Endothelial cell of umbilical vein (primary cell): ENCODE measurements at regions of chr7 and their contacts with region 1.

Region 1: DNA sequence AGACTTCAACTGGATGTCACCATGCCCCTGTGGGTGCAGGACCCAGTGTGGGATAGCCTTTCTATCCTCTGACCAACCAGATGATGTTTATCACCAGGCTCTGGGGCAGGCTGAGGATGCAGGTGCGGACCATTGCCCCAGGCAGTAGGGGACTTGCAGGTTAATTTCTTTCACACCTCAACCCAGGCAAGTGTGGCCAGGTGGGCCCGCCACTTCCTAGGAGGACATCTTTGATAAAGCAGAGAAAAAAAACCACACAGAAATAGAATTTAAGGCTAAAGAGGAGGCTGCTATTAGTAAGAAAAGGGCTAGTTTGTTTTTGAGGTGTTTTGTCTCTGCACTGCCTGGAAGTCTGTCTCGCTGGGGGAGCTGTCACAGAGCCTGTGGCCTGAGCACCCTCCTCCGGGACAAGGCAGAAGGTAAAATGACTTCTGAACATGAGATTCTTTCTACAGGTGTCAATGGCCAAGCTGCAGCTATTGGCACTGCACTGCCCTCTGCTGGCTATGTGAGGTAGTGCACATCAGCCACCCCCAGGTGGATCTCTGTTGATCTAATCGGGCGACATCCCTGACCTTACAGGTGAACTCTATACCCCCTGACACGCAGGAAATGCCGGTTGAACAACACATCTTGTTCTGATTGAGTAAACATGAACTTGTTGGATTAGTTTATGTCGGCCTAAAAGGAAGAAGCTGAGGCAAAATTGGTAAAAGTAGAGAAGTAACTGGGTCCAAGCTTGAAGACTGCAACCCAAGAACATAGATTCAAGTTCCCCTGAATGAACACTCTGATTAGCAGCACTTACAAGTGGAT is 21.0 kb downstream of the UPP1 start:
- DNase-seq: peak; percentile 69
- H3K4me3 ChIP-seq: no peak overlapping the region
- H3K27ac ChIP-seq: no peak overlapping the region
- H3K4me1 ChIP-seq: no peaks in the 10 kb centered on the region
- H3K27me3 ChIP-seq: no peaks in the 10 kb centered on the region
- CTCF ChIP-seq: peak; percentile 97
- POLR2A ChIP-seq: no peak

Region 2: GRCh38 chr7:46960970-46961369 is 1149.1 kb before region 1 on chr7:
- CTCF ChIA-PET with region 1: no interaction called
- POLR2A ChIA-PET with region 1: no interaction called
- dilution Hi-C with region 1: no loop called
- intact Hi-C with region 1: no loop called
- DNase-seq: no peak
- H3K4me3 ChIP-seq: no peak overlapping the region
- H3K27ac ChIP-seq: no peak overlapping the region
- H3K4me1 ChIP-seq: no peaks in the 10 kb centered on the region
- H3K27me3 ChIP-seq: no peaks in the 10 kb centered on the region
- CTCF ChIP-seq: no peak
- POLR2A ChIP-seq: no peak

Region 3: DNA sequence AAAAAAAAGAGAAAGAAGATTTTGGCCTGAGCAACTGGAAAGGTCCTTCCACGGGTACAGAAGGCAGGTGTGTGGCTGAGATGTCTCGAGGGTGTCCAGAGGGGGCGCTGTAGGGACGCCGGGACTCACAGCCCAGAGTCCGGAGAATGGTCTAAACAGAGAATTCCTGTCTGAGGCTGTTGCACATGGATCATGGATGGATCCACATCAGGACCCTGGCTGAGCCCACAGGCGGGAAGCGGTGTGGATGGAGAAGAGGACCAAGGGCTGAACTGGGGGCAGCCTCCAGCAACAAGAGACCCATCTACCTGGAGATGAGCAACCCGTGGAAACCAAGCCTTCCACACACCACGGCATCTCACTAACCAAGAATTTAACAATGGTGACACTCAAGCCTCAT is 216.8 kb before region 1 on chr7:
- CTCF ChIA-PET with region 1: no interaction called
- POLR2A ChIA-PET with region 1: no interaction called
- dilution Hi-C with region 1: no loop called
- intact Hi-C with region 1: loop called (anchors 5 kb)
- DNase-seq: no peak
- H3K4me3 ChIP-seq: no peak overlapping the region
- H3K27ac ChIP-seq: no peak overlapping the region
- H3K4me1 ChIP-seq: no peaks in the 10 kb centered on the region
- H3K27me3 ChIP-seq: peaks cover 0 to 2% of the 10 kb centered on the region in 2 experiments
- CTCF ChIP-seq: peak; percentile 38 to 39
- POLR2A ChIP-seq: no peak

Region 4: GRCh38 chr7:47968847-47969774 is 140.9 kb before region 1 on chr7:
- CTCF ChIA-PET with region 1: interaction called, 21 read pairs
- POLR2A ChIA-PET with region 1: no interaction called
- dilution Hi-C with region 1: no loop called
- intact Hi-C with region 1: no loop called
- DNase-seq: peak; percentile 90
- H3K4me3 ChIP-seq: no peak overlapping the region
- H3K27ac ChIP-seq: peak overlapping the region; percentile 73
- H3K4me1 ChIP-seq: peaks cover 32% of the 10 kb centered on the region
- H3K27me3 ChIP-seq: no peaks in the 10 kb centered on the region
- CTCF ChIP-seq: peak; percentile 91 to 95
- POLR2A ChIP-seq: no peak

Region 5: GRCh38 chr7:48035301-48035966 is 74.6 kb before region 1 on chr7 and contains the start of gene C7orf57:
- CTCF ChIA-PET with region 1: interaction called, 25 read pairs
- POLR2A ChIA-PET with region 1: no interaction called
- dilution Hi-C with region 1: no loop called
- intact Hi-C with region 1: loop called (anchors 1 kb)
- DNase-seq: peak; percentile 85
- H3K4me3 ChIP-seq: peak within 1 kb of the TSS; percentile 19 to 51 (median 43)
- H3K27ac ChIP-seq: no peak within 1 kb of the TSS
- H3K4me1 ChIP-seq: peaks cover 6% of the 10 kb centered on the region
- H3K27me3 ChIP-seq: peaks cover 16 to 26% of the 10 kb centered on the region in 2 experiments
- CTCF ChIP-seq: peak in 1 of 2 donors; percentile 37
- POLR2A ChIP-seq: no peak
- total RNA-seq, gene C7orf57: not detected in 2 replicates

Region 6: DNA sequence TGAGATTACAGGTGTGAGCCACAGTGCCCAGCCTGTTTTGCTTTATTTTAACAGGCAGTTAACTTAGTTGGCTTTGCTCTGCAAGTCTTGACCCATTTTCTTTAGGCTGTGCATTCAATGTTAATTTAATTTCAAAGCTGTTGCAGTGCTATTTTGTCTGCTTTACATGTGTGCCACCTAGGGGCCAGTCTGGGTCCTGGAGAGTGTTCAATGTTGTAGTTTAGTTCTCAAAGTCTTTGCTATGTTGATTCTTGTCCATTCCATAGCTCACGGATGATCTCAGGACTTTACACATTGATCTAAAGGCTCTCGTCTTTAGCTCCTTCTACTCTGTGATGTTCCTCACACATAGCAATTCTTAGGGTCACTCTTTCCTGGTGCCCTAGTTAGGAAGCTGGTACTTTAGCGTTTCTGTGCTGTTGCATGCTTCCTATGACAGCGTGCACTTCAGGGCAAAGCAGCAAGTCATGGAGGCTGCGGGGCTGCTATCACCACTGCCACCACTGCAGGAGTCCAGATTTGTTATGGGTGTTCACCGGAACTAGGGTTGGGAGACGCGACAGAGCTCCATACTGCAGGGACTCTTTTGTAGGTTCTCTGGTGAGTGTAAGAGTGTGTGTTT is 44.8 kb after region 1 on chr7:
- CTCF ChIA-PET with region 1: interaction called, 16 read pairs
- POLR2A ChIA-PET with region 1: no interaction called
- dilution Hi-C with region 1: no loop called
- intact Hi-C with region 1: loop called (anchors 2 kb)
- DNase-seq: peak; percentile 55
- H3K4me3 ChIP-seq: no peak overlapping the region
- H3K27ac ChIP-seq: no peak overlapping the region
- H3K4me1 ChIP-seq: no peaks in the 10 kb centered on the region
- H3K27me3 ChIP-seq: peaks cover 7 to 13% of the 10 kb centered on the region in 2 experiments
- CTCF ChIP-seq: peak; percentile 53 to 66
- POLR2A ChIP-seq: no peak

Region 7: DNA sequence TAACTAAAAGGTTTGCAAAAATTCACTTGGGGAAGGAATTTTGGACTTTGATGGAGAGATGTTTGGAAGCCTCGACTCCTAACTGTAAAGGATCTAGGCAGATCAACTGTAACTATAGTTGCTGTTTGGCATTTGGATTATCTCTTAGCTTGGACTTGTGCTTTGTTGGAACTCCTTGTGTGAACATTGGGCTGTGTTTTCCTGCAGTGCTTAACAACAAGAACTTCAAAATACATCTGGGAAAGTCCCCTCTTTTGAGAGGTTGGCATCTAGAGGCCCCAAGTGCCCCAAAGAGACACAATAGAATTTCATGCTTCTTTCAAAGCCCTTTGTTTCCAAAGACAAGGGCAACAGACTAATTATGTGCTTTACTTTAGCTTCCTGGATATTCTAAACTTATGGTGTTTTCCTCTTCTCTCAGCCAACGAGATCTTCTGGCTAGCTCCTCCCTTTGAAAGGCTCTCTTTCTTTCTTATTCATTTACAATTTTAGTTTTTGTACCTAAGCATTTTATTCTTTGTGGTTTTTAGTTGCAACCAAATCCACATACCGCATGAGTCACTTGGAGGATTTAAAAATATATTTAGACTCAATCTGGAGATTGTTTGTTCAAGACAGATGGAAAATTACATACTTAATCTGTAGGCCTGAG is 72.8 kb after region 1 on chr7:
- CTCF ChIA-PET with region 1: no interaction called
- POLR2A ChIA-PET with region 1: no interaction called
- dilution Hi-C with region 1: no loop called
- intact Hi-C with region 1: no loop called
- DNase-seq: peak; percentile 46
- H3K4me3 ChIP-seq: no peak overlapping the region
- H3K27ac ChIP-seq: no peak overlapping the region
- H3K4me1 ChIP-seq: no peaks in the 10 kb centered on the region
- H3K27me3 ChIP-seq: no peaks in the 10 kb centered on the region
- CTCF ChIP-seq: no peak
- POLR2A ChIP-seq: no peak

Region 8: GRCh38 chr7:48806731-48807130 is 696.7 kb after region 1 on chr7:
- CTCF ChIA-PET with region 1: no interaction called
- POLR2A ChIA-PET with region 1: no interaction called
- dilution Hi-C with region 1: no loop called
- intact Hi-C with region 1: no loop called
- DNase-seq: no peak
- H3K4me3 ChIP-seq: no peak overlapping the region
- H3K27ac ChIP-seq: no peak overlapping the region
- H3K4me1 ChIP-seq: no peaks in the 10 kb centered on the region
- H3K27me3 ChIP-seq: no peaks in the 10 kb centered on the region
- CTCF ChIP-seq: no peak
- POLR2A ChIP-seq: no peak